OCI-LY7 (cell line): ENCODE measurements at regions of chr5 and their contacts with region 1.

Region 1: GRCh38 chr5:69265931-69266330 is 31.2 kb downstream of the CDK7 start:
- DNase-seq: peak; percentile 15
- H3K4me3 ChIP-seq: no peak overlapping the region
- H3K27ac ChIP-seq: no peak overlapping the region
- H3K4me1 ChIP-seq: peaks cover 2% of the 10 kb centered on the region
- CTCF ChIP-seq: peak; percentile 58

Region 2: GRCh38 chr5:69317391-69317790 is 51.5 kb after region 1 on chr5:
- CTCF ChIA-PET with region 1: no interaction called
- POLR2A ChIA-PET with region 1: no interaction called
- intact Hi-C with region 1: no loop called
- DNase-seq: no peak
- H3K4me3 ChIP-seq: no peak overlapping the region
- H3K27ac ChIP-seq: no peak overlapping the region
- H3K4me1 ChIP-seq: no peaks in the 10 kb centered on the region
- CTCF ChIP-seq: no peak

Region 3: DNA sequence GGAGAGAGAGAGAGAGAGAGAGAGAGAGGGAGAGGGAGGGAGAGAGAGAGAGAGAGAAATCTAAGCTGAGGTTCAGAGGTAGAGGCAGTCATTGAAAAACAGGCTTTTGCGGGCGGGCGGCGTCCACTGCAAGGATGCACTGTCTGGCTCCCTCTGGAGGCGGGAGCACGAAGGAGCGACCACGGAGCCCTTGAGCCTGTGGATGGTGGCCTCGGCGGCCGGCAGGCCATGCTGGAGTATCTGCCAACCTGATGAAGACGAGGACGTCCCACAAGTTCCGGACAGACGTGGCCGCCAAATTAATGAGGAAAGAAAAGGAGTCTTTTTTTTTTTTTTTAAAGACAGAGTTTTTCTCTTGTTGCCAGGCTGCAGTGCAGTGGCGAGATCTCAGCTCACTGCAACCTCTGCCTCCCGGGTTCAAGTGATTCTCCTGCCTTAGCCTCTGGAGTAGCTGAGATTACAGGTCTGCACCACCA is 68.9 kb after region 1 on chr5:
- CTCF ChIA-PET with region 1: no interaction called
- POLR2A ChIA-PET with region 1: interaction called, 6 read pairs
- intact Hi-C with region 1: loop called (anchors 5 kb)
- DNase-seq: peak; percentile 82
- H3K4me3 ChIP-seq: no peak overlapping the region
- H3K27ac ChIP-seq: no peak overlapping the region
- H3K4me1 ChIP-seq: peaks cover 16% of the 10 kb centered on the region
- CTCF ChIP-seq: peak; percentile 80

Region 4: DNA sequence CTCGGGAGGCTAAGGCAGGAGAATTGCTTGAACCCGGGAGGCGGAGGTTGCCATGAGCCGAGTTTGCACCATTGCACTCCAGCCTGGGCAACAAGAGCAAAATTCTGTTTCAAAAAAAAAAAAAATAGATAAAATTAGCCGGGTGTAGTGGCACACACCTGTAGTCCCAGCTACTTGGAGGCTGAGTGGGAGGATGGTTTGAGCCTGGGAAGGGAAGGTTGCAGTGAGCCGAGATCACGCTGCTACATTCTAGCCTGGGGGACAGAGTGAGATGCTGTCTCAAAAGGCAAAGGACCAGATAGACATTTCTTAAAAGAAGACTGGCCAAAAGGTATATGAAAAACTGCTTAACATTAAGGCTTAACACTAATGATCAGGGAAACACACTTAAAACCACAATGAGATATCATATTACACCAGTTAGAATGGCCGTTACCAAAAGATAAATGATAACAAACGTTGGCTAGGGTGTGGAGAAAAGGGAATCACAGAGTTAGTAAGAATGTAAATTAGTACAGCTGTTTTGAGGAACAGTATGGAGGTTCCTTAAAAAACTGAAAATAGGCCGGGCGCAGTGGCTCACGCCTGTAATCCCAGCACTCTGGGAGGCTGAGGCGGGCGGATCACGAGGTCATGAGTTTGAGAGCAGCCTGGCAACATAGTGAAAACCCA is 138.9 kb after region 1 on chr5:
- CTCF ChIA-PET with region 1: no interaction called
- POLR2A ChIA-PET with region 1: no interaction called
- intact Hi-C with region 1: loop called (anchors 10 kb)
- DNase-seq: no peak
- H3K4me3 ChIP-seq: no peak overlapping the region
- H3K27ac ChIP-seq: no peak overlapping the region
- H3K4me1 ChIP-seq: no peaks in the 10 kb centered on the region
- CTCF ChIP-seq: no peak